Endothelial cell of umbilical vein (primary cell): ENCODE measurements at regions of chr9 and their contacts with region 1.

Region 1: GRCh38 chr9:69056191-69056815 is 20.8 kb downstream of the FXN start:
- DNase-seq: no peak
- H3K4me3 ChIP-seq: no peak overlapping the region
- H3K27ac ChIP-seq: no peak overlapping the region
- H3K4me1 ChIP-seq: peaks cover 3% of the 10 kb centered on the region
- H3K27me3 ChIP-seq: no peaks in the 10 kb centered on the region
- CTCF ChIP-seq: no peak
- POLR2A ChIP-seq: no peak

Region 2: DNA sequence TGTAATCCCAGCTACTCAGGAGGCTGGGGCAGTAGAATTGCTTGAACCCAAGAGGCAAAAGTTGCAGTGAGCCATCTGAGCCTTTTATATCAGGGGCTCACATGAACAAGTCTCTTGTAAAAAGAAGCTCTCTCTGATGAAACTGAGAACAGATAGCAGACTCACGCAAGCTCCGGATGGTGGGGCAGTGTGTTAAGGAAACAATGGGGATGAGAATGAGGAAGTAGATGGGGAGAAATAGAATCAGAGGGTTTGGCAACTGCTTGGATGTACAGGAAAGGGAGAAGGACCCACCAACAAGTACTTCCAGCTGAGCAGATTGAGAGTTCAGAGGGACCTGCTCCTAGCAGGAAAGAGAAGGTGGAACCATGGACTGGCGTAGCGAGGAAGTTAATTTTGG is 534.2 kb before region 1 on chr9:
- CTCF ChIA-PET with region 1: no interaction called
- POLR2A ChIA-PET with region 1: no interaction called
- dilution Hi-C with region 1: no loop called
- intact Hi-C with region 1: no loop called
- DNase-seq: no peak
- H3K4me3 ChIP-seq: no peak overlapping the region
- H3K27ac ChIP-seq: no peak overlapping the region
- H3K4me1 ChIP-seq: no peaks in the 10 kb centered on the region
- H3K27me3 ChIP-seq: no peaks in the 10 kb centered on the region
- CTCF ChIP-seq: no peak
- POLR2A ChIP-seq: no peak

Region 3: GRCh38 chr9:69066955-69067354 is 10.7 kb after region 1 on chr9:
- CTCF ChIA-PET with region 1: interaction called, 12 read pairs
- POLR2A ChIA-PET with region 1: no interaction called
- dilution Hi-C with region 1: no loop called
- intact Hi-C with region 1: no loop called
- DNase-seq: no peak
- H3K4me3 ChIP-seq: no peak overlapping the region
- H3K27ac ChIP-seq: no peak overlapping the region
- H3K4me1 ChIP-seq: no peaks in the 10 kb centered on the region
- H3K27me3 ChIP-seq: no peaks in the 10 kb centered on the region
- CTCF ChIP-seq: no peak
- POLR2A ChIP-seq: no peak

Region 4: DNA sequence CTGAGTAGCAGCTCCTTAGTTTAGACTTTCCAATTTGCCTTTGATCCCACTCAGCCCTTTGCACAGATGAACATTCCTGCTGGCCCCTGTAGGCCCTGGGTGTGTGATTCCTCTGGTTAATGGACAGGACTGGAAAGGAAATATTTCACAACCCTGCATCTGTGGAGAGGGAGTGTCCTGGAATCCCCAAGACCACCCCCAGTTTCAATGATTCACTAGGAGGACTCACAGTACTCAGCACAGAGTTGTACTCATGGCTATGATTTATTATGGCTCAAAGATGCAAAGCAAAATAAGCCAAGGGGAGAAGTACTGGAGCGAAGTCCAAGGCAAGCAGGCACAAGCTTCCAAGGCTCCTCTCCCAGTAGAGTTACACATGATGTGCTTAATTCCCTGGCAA is 75.4 kb after region 1 on chr9:
- CTCF ChIA-PET with region 1: interaction called, 14 read pairs
- POLR2A ChIA-PET with region 1: no interaction called
- dilution Hi-C with region 1: no loop called
- intact Hi-C with region 1: no loop called
- DNase-seq: peak; percentile 53
- H3K4me3 ChIP-seq: no peak overlapping the region
- H3K27ac ChIP-seq: peak overlapping the region; percentile 16
- H3K4me1 ChIP-seq: peaks cover 29% of the 10 kb centered on the region
- H3K27me3 ChIP-seq: no peaks in the 10 kb centered on the region
- CTCF ChIP-seq: no peak
- POLR2A ChIP-seq: no peak

Region 5: DNA sequence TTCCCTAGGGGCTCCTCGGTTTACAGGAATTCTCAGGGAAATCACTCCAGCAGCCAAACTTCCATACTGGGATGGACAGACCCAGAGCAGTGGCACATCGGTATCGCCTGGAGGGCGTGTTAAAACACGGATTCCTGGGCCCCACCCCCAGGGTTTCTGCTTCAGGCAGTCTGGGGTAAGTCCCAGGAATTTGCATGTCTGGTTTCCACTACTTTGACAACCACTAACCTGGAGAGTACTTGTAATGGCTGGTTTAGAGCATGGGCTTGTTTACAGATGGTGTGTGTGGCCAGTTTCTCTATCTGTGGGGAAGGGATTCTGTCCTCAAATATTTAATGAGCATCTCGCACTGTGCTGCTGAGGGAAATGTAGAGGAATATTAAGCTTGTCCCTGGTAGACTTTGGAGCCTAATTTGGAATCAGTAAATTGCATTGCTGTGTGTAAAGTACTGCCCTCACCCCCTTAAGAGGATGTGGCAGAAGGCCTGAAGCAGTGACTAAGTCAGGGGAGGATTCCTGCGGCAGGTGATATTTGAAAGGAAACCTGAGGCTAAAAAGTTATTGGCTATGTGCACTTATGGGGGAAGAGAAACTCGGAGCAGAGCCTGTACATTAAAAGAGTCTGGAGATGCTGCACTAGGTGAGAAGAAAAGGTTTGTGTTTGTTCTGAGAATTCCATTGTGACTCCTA is 99.2 kb after region 1 on chr9:
- CTCF ChIA-PET with region 1: interaction called, 71 read pairs
- POLR2A ChIA-PET with region 1: no interaction called
- dilution Hi-C with region 1: no loop called
- intact Hi-C with region 1: no loop called
- DNase-seq: no peak
- H3K4me3 ChIP-seq: no peak overlapping the region
- H3K27ac ChIP-seq: no peak overlapping the region
- H3K4me1 ChIP-seq: peaks cover 1% of the 10 kb centered on the region
- H3K27me3 ChIP-seq: no peaks in the 10 kb centered on the region
- CTCF ChIP-seq: no peak
- POLR2A ChIP-seq: no peak

Region 6: GRCh38 chr9:69186841-69187611 is 130.7 kb after region 1 on chr9:
- CTCF ChIA-PET with region 1: interaction called, 281 read pairs
- POLR2A ChIA-PET with region 1: no interaction called
- dilution Hi-C with region 1: loop called (anchors 10 kb)
- intact Hi-C with region 1: no loop called
- DNase-seq: peak; percentile 70
- H3K4me3 ChIP-seq: no peak overlapping the region
- H3K27ac ChIP-seq: peak overlapping the region; percentile 49
- H3K4me1 ChIP-seq: peaks cover 38% of the 10 kb centered on the region
- H3K27me3 ChIP-seq: no peaks in the 10 kb centered on the region
- CTCF ChIP-seq: no peak
- POLR2A ChIP-seq: no peak